ENCODE measurements at regions of chr2 and their contacts with region 1.

Region 1: GRCh38 chr2:202178342-202178958 is 59.9 kb downstream of the SUMO1 start:
- DNase-seq: peak; percentile 87
- H3K4me3 Mint-ChIP-seq: no peak overlapping the region
- H3K27ac Mint-ChIP-seq: no peak overlapping the region
- H3K4me1 Mint-ChIP-seq: peaks cover 5% of the 10 kb centered on the region
- H3K27me3 Mint-ChIP-seq: peaks cover 9% of the 10 kb centered on the region

Region 2: DNA sequence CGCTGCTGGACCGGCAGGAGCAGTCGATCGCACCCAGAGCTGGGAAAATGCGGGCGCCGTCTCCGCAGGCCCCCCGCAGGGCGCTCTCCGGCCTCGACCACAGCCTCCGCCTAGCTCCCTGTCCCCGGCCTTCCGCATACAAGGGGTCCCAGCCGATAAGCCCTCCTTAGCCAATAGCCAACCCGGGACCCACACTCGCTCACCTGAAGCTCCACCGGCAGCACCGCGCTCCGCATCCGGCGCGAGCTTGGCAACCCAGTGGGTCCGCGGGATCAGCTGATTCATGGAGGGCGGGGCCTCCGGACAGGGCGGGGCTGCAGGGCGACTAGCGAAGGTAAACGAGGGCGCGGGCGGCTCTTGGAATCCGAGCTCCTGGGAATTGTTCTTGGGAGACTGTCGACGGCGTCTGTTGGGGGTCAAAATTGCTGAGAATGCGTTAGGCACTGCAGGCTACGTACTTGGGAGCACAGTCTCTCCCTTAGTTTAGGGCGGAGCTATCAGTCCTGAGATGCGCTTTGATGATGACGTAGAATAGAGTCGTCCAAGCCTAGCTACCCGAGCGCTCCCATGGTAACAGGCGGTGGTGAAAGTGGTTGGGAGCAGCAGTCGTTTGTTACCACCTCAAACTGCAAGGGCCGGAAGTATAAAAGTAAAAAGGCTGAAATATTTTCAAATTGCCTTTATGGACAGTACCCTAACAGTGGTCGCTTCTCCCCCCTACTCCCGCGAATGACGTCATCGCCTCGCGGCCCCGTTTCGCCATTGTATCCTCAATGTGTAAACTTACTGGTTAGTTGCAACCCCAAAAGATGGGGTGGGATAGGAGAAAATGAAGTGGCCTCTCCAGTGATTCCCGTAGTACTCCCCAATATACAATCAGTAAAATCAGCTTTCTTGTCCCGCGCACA is 397.5 kb before region 1 on chr2 and contains the start of gene ALS2:
- intact Hi-C with region 1: loop called (anchors 10 kb)
- DNase-seq: peak; percentile 99
- H3K4me3 Mint-ChIP-seq: peak within 1 kb of the TSS; percentile 95
- H3K27ac Mint-ChIP-seq: peak within 1 kb of the TSS; percentile 92
- H3K4me1 Mint-ChIP-seq: peaks cover 22% of the 10 kb centered on the region
- H3K27me3 Mint-ChIP-seq: peaks cover 20% of the 10 kb centered on the region
- total RNA-seq, gene ALS2: 10.7 and 11.3 TPM in 2 replicates

Region 3: DNA sequence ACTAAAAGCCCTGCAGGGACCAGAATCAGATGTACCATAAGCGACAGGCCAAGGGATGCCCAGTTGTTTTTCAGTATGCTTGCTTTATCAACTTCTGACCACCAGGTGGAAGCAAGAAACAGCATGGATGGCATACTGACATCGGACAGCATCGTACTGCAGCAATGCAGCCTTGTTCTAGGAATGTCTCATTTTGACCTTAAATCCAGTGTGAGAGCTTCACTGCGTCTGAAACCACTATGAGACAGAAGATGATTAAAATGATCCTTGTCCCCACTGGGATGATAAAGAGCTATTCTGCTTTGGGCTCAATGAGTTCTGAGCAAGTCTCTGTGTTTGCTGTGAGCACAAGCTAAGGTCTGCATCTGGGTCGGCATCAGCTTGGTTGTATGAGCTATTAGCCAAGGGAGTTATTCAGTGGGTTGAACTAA is 317.8 kb before region 1 on chr2:
- intact Hi-C with region 1: loop called (anchors 1 kb)
- DNase-seq: peak; percentile 83
- H3K4me3 Mint-ChIP-seq: no peak overlapping the region
- H3K27ac Mint-ChIP-seq: no peak overlapping the region
- H3K4me1 Mint-ChIP-seq: peaks cover 12% of the 10 kb centered on the region
- H3K27me3 Mint-ChIP-seq: peaks cover 38% of the 10 kb centered on the region

Region 4: GRCh38 chr2:201980389-201980831 is 198.0 kb before region 1 on chr2:
- intact Hi-C with region 1: no loop called
- DNase-seq: no peak
- H3K4me3 Mint-ChIP-seq: no peak overlapping the region
- H3K27ac Mint-ChIP-seq: no peak overlapping the region
- H3K4me1 Mint-ChIP-seq: no peaks in the 10 kb centered on the region
- H3K27me3 Mint-ChIP-seq: no peaks in the 10 kb centered on the region

Region 5: DNA sequence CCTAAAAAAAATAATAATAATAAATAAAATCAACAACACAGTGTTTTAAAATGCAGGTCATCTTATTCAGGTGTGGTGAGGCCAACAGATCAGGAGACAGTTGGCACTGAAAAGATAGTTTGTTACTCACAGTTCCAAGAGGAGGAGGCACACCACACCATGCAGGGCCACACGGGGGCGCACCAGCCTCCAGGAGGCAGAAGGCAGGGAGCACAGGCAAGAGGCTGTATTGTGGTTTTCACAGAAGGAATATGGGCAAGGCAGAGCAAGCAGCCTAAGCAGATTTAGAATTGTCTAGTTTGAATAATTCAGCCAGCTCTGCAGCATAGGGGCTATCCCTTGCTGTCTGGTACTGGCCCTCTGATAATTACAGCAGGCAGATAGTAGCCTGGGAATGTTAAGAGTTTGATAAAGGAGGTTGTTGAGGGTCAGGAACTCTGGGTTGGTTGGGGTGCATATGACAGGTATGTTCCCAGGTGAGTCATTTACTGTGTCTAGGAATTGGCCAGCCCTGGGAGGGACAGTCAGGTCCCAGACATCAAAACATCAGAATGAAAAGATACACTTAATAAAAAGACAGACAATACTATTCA is 74.1 kb before region 1 on chr2:
- intact Hi-C with region 1: loop called (anchors 1 kb)
- DNase-seq: peak; percentile 82
- H3K4me3 Mint-ChIP-seq: no peak overlapping the region
- H3K27ac Mint-ChIP-seq: no peak overlapping the region
- H3K4me1 Mint-ChIP-seq: no peaks in the 10 kb centered on the region
- H3K27me3 Mint-ChIP-seq: peaks cover 15% of the 10 kb centered on the region